Naive thymus-derived CD4-positive, alpha-beta T cell (primary cell): ENCODE measurements at regions of chr2 and their contacts with region 1.

Region 1: DNA sequence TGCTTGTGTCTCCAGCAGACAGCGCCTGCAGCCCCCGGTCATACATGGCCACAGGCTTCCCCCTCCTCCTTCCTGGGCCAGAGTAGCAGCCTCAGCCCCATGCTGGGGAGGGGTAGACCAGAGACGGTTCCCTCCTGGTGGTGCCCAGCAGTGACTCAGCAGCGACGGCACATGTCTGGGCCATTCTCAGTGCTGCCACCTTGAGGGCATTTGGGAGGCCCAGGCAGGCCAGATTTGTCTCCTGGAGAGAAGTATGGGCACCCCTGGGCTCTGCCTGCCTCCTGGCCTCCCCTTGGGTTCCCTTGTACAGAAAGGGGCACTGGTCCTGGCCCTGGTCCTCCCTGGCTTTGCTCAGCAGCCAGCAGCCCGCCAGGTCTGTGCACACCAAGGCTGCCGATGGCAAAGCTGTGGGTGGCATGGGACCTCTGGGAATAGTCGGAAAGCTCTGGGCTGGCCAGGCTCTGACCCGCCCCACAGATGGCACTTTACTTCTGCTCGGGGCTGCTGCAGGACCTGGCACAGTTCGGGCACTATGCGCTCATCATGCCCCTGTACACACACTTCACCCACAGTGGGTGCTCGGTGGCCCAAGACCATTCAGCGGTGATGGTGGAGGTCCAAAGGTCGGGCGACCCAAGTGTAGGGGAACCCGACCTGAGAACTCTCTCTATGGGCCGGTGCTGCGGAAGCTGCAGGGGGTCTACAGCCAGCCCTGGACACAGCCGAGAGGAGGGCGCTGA is 11.4 kb upstream of the ALPI start:
- DNase-seq: peak in 8 of 9 donors; percentile 17 to 68 (median 35)
- ATAC-seq: peak; percentile 47
- H3K4me3 ChIP-seq: no peak overlapping the region
- H3K4me3 Mint-ChIP-seq: no peak overlapping the region
- H3K27ac ChIP-seq: no peak overlapping the region
- H3K27ac Mint-ChIP-seq: no peak overlapping the region
- H3K4me1 ChIP-seq: no peaks in the 10 kb centered on the region
- H3K4me1 Mint-ChIP-seq: peaks cover 0 to 12% (median 3%) of the 10 kb centered on the region in 7 donors
- H3K27me3 ChIP-seq: no peaks in the 10 kb centered on the region
- H3K27me3 Mint-ChIP-seq: peaks cover 0 to 3% (median 0%) of the 10 kb centered on the region in 5 donors

Region 2: GRCh38 chr2:232142049-232142448 is 302.5 kb before region 1 on chr2:
- CTCF ChIA-PET with region 1: no interaction called
- POLR2A ChIA-PET with region 1: no interaction called
- intact Hi-C with region 1: loop called in 1 of 2 experiments (anchors 5 kb)
- DNase-seq: peak in 4 of 9 donors; percentile 22 to 41 (median 30)
- ATAC-seq: no peak
- H3K4me3 ChIP-seq: no peak overlapping the region
- H3K4me3 Mint-ChIP-seq: no peak overlapping the region
- H3K27ac ChIP-seq: no peak overlapping the region
- H3K27ac Mint-ChIP-seq: peak overlapping the region in 1 of 9 donors; percentile 72
- H3K4me1 ChIP-seq: peaks cover 0 to 29% of the 10 kb centered on the region in 2 donors
- H3K4me1 Mint-ChIP-seq: peaks cover 15 to 47% (median 41%) of the 10 kb centered on the region in 7 donors
- H3K27me3 ChIP-seq: no peaks in the 10 kb centered on the region
- H3K27me3 Mint-ChIP-seq: no peaks in the 10 kb centered on the region

Region 3: GRCh38 chr2:232339121-232340081 is 105.2 kb before region 1 on chr2:
- CTCF ChIA-PET with region 1: no interaction called
- POLR2A ChIA-PET with region 1: no interaction called
- intact Hi-C with region 1: loop called (anchors 1 to 5 kb)
- DNase-seq: no peak
- ATAC-seq: no peak
- H3K4me3 ChIP-seq: no peak overlapping the region
- H3K4me3 Mint-ChIP-seq: peak overlapping the region in 1 of 10 donors; percentile 23
- H3K27ac ChIP-seq: no peak overlapping the region
- H3K27ac Mint-ChIP-seq: peak overlapping the region in 4 of 9 donors; percentile 7 to 54 (median 50)
- H3K4me1 ChIP-seq: no peaks in the 10 kb centered on the region
- H3K4me1 Mint-ChIP-seq: peaks cover 0 to 20% (median 6%) of the 10 kb centered on the region in 7 donors
- H3K27me3 ChIP-seq: no peaks in the 10 kb centered on the region
- H3K27me3 Mint-ChIP-seq: peaks cover 0 to 4% (median 0%) of the 10 kb centered on the region in 5 donors

Region 4: GRCh38 chr2:232521959-232522622 is 77.5 kb after region 1 on chr2:
- CTCF ChIA-PET with region 1: no interaction called
- POLR2A ChIA-PET with region 1: no interaction called
- intact Hi-C with region 1: loop called (anchors 2 to 10 kb)
- DNase-seq: peak; percentile 31 to 82 (median 64)
- ATAC-seq: peak; percentile 80
- H3K4me3 ChIP-seq: peak overlapping the region; percentile 20
- H3K4me3 Mint-ChIP-seq: peak overlapping the region in 5 of 10 donors; percentile 45 to 80 (median 66)
- H3K27ac ChIP-seq: no peak overlapping the region
- H3K27ac Mint-ChIP-seq: no peak overlapping the region
- H3K4me1 ChIP-seq: peaks cover 0 to 7% of the 10 kb centered on the region in 2 donors
- H3K4me1 Mint-ChIP-seq: peaks cover 2 to 17% (median 11%) of the 10 kb centered on the region in 7 donors
- H3K27me3 ChIP-seq: peaks cover 0 to 9% of the 10 kb centered on the region in 2 donors
- H3K27me3 Mint-ChIP-seq: peaks cover 18 to 40% (median 31%) of the 10 kb centered on the region in 5 donors